ENCODE measurements at regions of chr12 and their contacts with region 1.

Region 1: DNA sequence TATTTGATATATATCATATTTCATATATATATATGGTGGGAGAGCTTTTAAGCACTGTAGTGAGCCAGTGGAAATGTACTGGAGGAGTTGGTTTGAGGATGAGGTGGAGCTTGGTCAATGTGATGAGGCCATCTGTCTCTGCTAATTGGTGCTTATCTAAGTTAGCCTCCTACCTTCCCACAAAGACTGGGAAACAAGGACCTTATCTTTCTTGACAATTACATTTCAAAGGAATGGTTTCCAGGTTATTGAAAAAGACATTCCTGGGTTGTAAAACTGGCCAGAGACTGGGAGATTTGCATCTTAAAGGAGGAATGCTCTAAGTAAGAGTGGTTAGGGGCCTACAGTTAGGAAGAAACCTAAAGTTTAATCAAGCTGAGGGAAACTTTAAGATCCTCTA is 212.8 kb upstream of the SYT1 start:
- DNase-seq: no peak
- H3K4me3 ChIP-seq: no peak overlapping the region
- CTCF ChIP-seq: no peak
- POLR2A ChIP-seq: no peak

Region 2: GRCh38 chr12:78050790-78051189 is 601.0 kb before region 1 on chr12:
- intact Hi-C with region 1: loop called (anchors 10 kb)
- DNase-seq: no peak
- H3K4me3 ChIP-seq: no peak overlapping the region
- CTCF ChIP-seq: no peak
- POLR2A ChIP-seq: no peak

Region 3: GRCh38 chr12:78229591-78230101 is 422.1 kb before region 1 on chr12:
- intact Hi-C with region 1: no loop called
- DNase-seq: no peak
- H3K4me3 ChIP-seq: no peak overlapping the region
- CTCF ChIP-seq: no peak
- POLR2A ChIP-seq: no peak